ENCODE measurements at regions of chr1 and their contacts with region 1.

Region 1: DNA sequence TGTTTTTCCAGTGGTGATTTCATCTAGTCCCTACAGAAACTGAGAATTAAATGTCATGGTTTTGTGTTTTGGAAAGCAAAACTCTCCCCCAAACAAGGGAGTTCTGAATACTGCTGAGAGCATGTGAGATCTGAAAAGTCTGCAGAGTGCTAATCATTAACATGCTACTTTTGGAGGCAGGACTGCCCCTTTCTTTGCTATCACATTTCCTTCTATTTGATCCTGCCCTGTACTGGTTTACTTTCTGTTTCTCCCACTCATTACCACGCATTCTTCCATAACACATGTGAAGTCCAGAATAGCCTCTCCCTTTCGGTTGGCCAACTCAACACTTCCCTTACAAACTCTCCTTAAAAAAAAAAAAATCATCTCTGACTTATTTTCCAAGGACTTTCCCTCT is 63.6 kb downstream of the GADD45A start:
- DNase-seq: no peak
- ATAC-seq: peak; percentile 20 to 80 (median 73)
- H3K4me3 ChIP-seq: peak overlapping the region in 7 of 12 donors; percentile 5 to 35 (median 22)
- H3K27ac ChIP-seq: peak overlapping the region in 11 of 12 donors; percentile 1 to 80 (median 62)
- H3K4me1 ChIP-seq: peaks cover 0 to 68% (median 39%) of the 10 kb centered on the region in 12 donors
- H3K27me3 ChIP-seq: no peaks in the 10 kb centered on the region
- CTCF ChIP-seq: no peak
- POLR2A ChIP-seq: no peak

Region 2: DNA sequence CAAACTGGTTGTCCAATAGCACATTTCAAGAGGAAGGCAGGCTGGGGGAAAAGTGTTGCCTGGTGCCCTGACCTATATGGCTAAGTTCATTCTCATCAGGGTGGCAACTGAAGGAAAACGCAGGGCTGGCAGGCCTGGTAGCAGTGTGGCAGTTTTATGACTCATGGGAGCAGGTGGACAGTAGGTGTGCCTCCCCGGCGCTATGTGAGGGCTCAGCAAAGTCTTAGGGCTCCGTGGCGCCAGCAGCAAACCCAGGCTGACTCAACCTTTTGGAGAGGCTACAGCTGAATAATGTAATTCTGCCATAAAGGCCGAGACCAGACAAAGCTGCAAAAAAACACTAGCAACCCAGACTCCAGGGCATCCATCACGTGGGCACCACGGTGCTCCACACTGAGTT is 40.0 kb before region 1 on chr1:
- intact Hi-C with region 1: loop called in 1 of 10 experiments (anchors 5 kb)
- DNase-seq: no peak
- ATAC-seq: no peak
- H3K4me3 ChIP-seq: no peak overlapping the region
- H3K27ac ChIP-seq: peak overlapping the region in 1 of 12 donors; percentile 18
- H3K4me1 ChIP-seq: peaks cover 0 to 58% (median 33%) of the 10 kb centered on the region in 12 donors
- H3K27me3 ChIP-seq: no peaks in the 10 kb centered on the region
- CTCF ChIP-seq: no peak
- POLR2A ChIP-seq: no peak